ENCODE measurements at regions of chr3 and their contacts with region 1.

Region 1: DNA sequence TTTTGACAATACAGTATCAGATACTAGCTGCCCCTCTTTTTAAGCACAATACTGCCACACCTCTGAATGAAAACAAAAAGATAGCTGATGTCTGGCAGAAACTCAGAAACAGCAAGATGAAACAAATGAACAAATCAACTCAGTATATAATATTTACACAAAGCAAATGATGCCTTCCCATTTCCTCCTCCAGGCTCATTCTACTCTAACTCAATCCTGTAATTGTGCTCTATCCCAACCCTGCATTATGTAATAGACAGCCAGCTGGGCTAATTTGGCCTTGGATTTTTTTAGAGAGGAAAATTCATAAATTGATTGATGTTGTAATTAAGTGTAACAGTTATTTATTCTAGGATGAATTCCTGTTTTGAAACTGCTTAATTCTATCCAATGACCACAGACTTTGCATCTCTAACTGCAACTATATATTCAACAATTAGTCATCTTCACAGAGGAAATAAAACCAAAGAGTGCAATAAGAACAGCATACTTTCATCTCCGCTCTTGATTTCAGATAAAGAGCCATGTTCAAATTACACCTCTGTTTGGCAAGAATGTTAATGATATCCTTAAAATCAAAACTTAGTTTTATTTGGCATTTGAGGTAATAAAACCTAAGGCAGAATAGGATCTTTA is 6.1 kb downstream of the ATG3 start:
- DNase-seq: peak; percentile 12
- ATAC-seq: peak; percentile 72
- H3K4me3 ChIP-seq: no peak overlapping the region
- H3K27ac ChIP-seq: no peak overlapping the region
- H3K4me1 ChIP-seq: peaks cover 8% of the 10 kb centered on the region; the same call in 1 of the 2 replicates
- H3K27me3 ChIP-seq: no peaks in the 10 kb centered on the region
- CTCF ChIP-seq: no peak
- POLR2A ChIP-seq: no peak
- RAD21 ChIP-seq: no peak

Region 2: GRCh38 chr3:112321867-112322649 is 233.6 kb before region 1 on chr3:
- CTCF ChIA-PET with region 1: no interaction called
- POLR2A ChIA-PET with region 1: no interaction called
- dilution Hi-C with region 1: no loop called
- in situ Hi-C with region 1: no loop called
- intact Hi-C with region 1: loop called (anchors 1 kb)
- DNase-seq: no peak
- ATAC-seq: no peak
- H3K4me3 ChIP-seq: no peak overlapping the region
- H3K27ac ChIP-seq: no peak overlapping the region
- H3K4me1 ChIP-seq: no peaks in the 10 kb centered on the region
- H3K27me3 ChIP-seq: peaks cover 11% of the 10 kb centered on the region
- CTCF ChIP-seq: no peak
- POLR2A ChIP-seq: no peak
- RAD21 ChIP-seq: no peak

Measured in IMR-90 (cell line).